Panc1 (cell line): ENCODE measurements at regions of chr6 and their contacts with region 1.

Region 1: GRCh38 chr6:119349323-119350042 is at the start of gene MAN1A1:
- DNase-seq: no peak
- ATAC-seq: peak; percentile 91
- H3K4me3 ChIP-seq: peak within 1 kb of the TSS; percentile 56 to 65
- H3K27ac ChIP-seq: no peak within 1 kb of the TSS
- H3K4me1 ChIP-seq: peaks cover 11% of the 10 kb centered on the region
- H3K27me3 ChIP-seq: peaks cover 51% of the 10 kb centered on the region
- CTCF ChIP-seq: no peak
- total RNA-seq, gene MAN1A1: 3.2 TPM

Region 2: DNA sequence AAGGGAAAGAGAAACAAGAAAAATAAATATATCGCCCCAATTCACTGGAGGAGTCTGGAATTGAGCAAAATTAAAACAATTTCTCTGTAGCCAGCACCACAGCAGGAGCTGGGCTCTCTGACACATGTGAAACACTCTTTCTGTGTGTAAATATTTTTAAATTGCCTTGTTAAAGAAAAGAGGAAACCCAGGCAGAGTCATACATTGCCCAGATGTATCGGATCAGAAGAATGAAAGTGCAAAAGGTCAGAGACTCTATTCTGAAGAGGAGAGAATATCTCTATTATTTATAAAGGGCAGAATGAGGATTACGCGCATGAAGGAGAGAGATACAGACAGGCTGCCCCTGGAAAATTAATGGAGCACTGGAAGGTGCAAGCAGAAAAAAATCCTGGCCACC is 127.1 kb after region 1 on chr6:
- CTCF ChIA-PET with region 1: no interaction called
- POLR2A ChIA-PET with region 1: no interaction called
- in situ Hi-C with region 1: no loop called
- intact Hi-C with region 1: no loop called
- DNase-seq: no peak
- ATAC-seq: no peak
- H3K4me3 ChIP-seq: no peak overlapping the region
- H3K27ac ChIP-seq: no peak overlapping the region
- H3K4me1 ChIP-seq: no peaks in the 10 kb centered on the region
- H3K27me3 ChIP-seq: no peaks in the 10 kb centered on the region
- CTCF ChIP-seq: no peak

Region 3: GRCh38 chr6:119676961-119677360 is 327.5 kb after region 1 on chr6:
- CTCF ChIA-PET with region 1: no interaction called
- POLR2A ChIA-PET with region 1: no interaction called
- in situ Hi-C with region 1: no loop called
- intact Hi-C with region 1: no loop called
- DNase-seq: no peak
- ATAC-seq: no peak
- H3K4me3 ChIP-seq: no peak overlapping the region
- H3K27ac ChIP-seq: no peak overlapping the region
- H3K4me1 ChIP-seq: no peaks in the 10 kb centered on the region
- H3K27me3 ChIP-seq: no peaks in the 10 kb centered on the region
- CTCF ChIP-seq: no peak

Region 4: DNA sequence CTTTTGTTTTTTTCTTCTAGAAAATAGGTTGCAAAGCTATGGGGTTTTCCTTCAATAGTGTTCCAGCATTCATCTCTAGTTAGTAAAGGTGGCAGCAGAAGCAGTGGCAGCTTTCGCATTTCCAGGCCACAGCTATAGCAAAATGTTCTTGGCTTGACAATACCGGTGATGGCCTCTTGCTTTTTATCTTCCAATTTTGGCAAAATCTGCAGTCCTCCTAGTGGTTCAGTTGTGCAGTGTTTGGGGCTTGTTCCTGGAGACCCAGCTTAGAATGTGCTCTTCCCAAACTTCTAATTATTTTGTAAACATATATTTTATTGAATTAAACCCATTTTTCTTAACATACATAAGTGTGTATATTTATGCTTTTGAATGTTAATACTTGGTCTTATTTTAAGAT is 370.7 kb after region 1 on chr6:
- CTCF ChIA-PET with region 1: no interaction called
- POLR2A ChIA-PET with region 1: no interaction called
- in situ Hi-C with region 1: no loop called
- intact Hi-C with region 1: loop called (anchors 10 kb)
- DNase-seq: no peak
- ATAC-seq: no peak
- H3K4me3 ChIP-seq: no peak overlapping the region
- H3K27ac ChIP-seq: no peak overlapping the region
- H3K4me1 ChIP-seq: no peaks in the 10 kb centered on the region
- H3K27me3 ChIP-seq: no peaks in the 10 kb centered on the region
- CTCF ChIP-seq: 0 out of 2 replicates have a peak, but pooled peaks have one; percentile 5

Region 5: GRCh38 chr6:120826253-120826652 is 1476.8 kb after region 1 on chr6:
- CTCF ChIA-PET with region 1: no interaction called
- POLR2A ChIA-PET with region 1: no interaction called
- in situ Hi-C with region 1: no loop called
- intact Hi-C with region 1: loop called (anchors 5 kb)
- DNase-seq: peak; percentile 22
- ATAC-seq: no peak
- H3K4me3 ChIP-seq: no peak overlapping the region
- H3K27ac ChIP-seq: no peak overlapping the region
- H3K4me1 ChIP-seq: no peaks in the 10 kb centered on the region
- H3K27me3 ChIP-seq: no peaks in the 10 kb centered on the region
- CTCF ChIP-seq: peak; percentile 73